ENCODE measurements at regions of chr5 and their contacts with region 1.

Region 1: GRCh38 chr5:74311961-74312360 is 328.6 kb downstream of the ENC1 start:
- DNase-seq: no peak
- ATAC-seq: no peak
- H3K4me3 ChIP-seq: no peak overlapping the region
- H3K27ac ChIP-seq: no peak overlapping the region
- H3K4me1 ChIP-seq: no peaks in the 10 kb centered on the region
- H3K27me3 ChIP-seq: peaks cover 0 to 7% of the 10 kb centered on the region in 2 experiments; a peak in 2 of 5 replicates
- CTCF ChIP-seq: no peak
- EP300 ChIP-seq: no peak
- POLR2A ChIP-seq: no peak
- RAD21 ChIP-seq: no peak

Region 2: GRCh38 chr5:74290633-74291241 is 21.2 kb before region 1 on chr5:
- CTCF ChIA-PET with region 1: no interaction called
- POLR2A ChIA-PET with region 1: no interaction called
- in situ Hi-C with region 1: no loop called
- intact Hi-C with region 1: loop called (anchors 1 kb)
- DNase-seq: no peak
- ATAC-seq: no peak
- H3K4me3 ChIP-seq: no peak overlapping the region
- H3K27ac ChIP-seq: no peak overlapping the region
- H3K4me1 ChIP-seq: no peaks in the 10 kb centered on the region
- H3K27me3 ChIP-seq: no peaks in the 10 kb centered on the region
- CTCF ChIP-seq: no peak
- EP300 ChIP-seq: no peak
- POLR2A ChIP-seq: no peak
- RAD21 ChIP-seq: peak in 1 of 2 experiments; percentile 42; a peak in 1 of 4 replicates

Region 3: GRCh38 chr5:74357827-74358226 is 45.9 kb after region 1 on chr5:
- CTCF ChIA-PET with region 1: no interaction called
- POLR2A ChIA-PET with region 1: no interaction called
- in situ Hi-C with region 1: no loop called
- intact Hi-C with region 1: no loop called
- DNase-seq: no peak
- ATAC-seq: no peak
- H3K4me3 ChIP-seq: no peak overlapping the region
- H3K27ac ChIP-seq: no peak overlapping the region
- H3K4me1 ChIP-seq: no peaks in the 10 kb centered on the region; a peak in 2 of 5 replicates
- H3K27me3 ChIP-seq: peaks cover 0 to 17% of the 10 kb centered on the region in 2 experiments; a peak in 3 of 5 replicates
- CTCF ChIP-seq: no peak
- EP300 ChIP-seq: no peak
- POLR2A ChIP-seq: no peak
- RAD21 ChIP-seq: no peak

Measured in K562 (cell line).